WTC11 (cell line): ENCODE measurements at regions of chr3 and their contacts with region 1.

Region 1: DNA sequence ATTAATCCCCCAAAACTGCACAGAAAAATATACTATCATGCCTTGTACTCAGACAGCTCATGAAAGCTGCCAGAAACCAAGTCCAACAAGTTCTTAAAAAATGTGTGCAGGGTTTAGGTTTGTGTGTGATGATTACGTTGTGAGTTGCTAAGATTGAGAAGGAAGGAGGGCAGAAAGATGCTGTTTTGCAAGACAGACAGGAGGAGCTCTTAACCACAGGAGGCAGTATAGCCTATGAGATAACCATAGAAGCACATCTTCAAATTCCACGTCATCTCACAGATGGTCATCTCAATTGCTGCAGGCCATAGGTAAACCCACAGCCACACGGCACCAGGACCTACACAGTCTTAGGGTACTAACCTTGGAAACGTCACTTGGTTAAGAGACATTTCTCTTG is 191.9 kb downstream of the STT3B start:
- DNase-seq: no peak
- ATAC-seq: peak; percentile 55
- H3K4me3 Mint-ChIP-seq: peak overlapping the region; percentile 32
- H3K27ac Mint-ChIP-seq: peak overlapping the region; percentile 86
- H3K4me1 Mint-ChIP-seq: peaks cover 30% of the 10 kb centered on the region
- H3K27me3 Mint-ChIP-seq: no peaks in the 10 kb centered on the region
- CTCF ChIP-seq: no peak

Region 2: DNA sequence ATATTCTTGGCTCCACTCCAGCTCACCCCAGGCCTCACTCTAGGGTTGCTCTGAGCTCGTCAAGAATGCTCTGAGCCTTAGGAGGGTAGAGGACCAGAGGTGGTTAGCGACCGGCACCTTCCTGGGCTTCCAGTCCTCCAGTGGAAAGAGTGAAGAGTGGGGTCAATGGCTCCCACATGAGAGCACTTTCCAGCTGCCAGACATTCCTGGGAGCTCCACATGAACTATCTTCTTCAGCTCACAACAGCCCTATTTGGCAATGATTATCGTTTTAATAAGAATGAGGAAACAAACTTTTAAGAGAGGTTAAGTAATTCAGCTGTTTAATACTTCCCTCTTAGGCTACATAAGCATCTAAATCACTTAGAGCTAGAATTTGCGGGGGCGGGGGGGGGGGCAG is 52.7 kb before region 1 on chr3:
- CTCF ChIA-PET with region 1: no interaction called
- POLR2A ChIA-PET with region 1: no interaction called
- DNase-seq: no peak
- ATAC-seq: no peak
- H3K4me3 Mint-ChIP-seq: no peak overlapping the region
- H3K27ac Mint-ChIP-seq: no peak overlapping the region
- H3K4me1 Mint-ChIP-seq: peaks cover 16% of the 10 kb centered on the region; the same call in 1 of the 2 replicates
- H3K27me3 Mint-ChIP-seq: no peaks in the 10 kb centered on the region
- CTCF ChIP-seq: no peak

Region 3: GRCh38 chr3:31735667-31736066 is 11.0 kb after region 1 on chr3:
- CTCF ChIA-PET with region 1: interaction called, 10 read pairs
- POLR2A ChIA-PET with region 1: no interaction called
- DNase-seq: no peak
- ATAC-seq: peak; percentile 50
- H3K4me3 Mint-ChIP-seq: no peak overlapping the region
- H3K27ac Mint-ChIP-seq: peak overlapping the region; percentile 46
- H3K4me1 Mint-ChIP-seq: peaks cover 29% of the 10 kb centered on the region
- H3K27me3 Mint-ChIP-seq: no peaks in the 10 kb centered on the region
- CTCF ChIP-seq: no peak

Region 4: DNA sequence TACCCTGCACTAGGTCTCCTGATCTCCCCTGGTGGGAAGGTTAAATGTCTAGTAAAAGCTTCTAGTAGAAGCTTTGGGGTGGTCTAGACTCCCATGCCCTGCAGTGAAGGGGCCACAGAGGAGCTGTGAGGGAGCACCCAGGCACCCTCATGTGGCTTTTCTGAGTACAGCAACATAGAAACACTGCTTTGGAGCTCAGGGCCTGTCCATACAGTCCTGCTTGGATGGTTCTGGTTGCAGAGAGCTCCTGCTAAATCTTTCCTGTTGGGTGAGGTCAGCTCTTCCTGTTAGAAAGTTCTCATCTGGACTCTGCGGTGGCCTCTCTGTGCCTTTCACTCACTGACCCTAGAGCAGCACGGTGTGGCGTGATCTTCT is 429.5 kb after region 1 on chr3:
- CTCF ChIA-PET with region 1: interaction called, 17 read pairs
- POLR2A ChIA-PET with region 1: no interaction called
- DNase-seq: peak; percentile 37
- ATAC-seq: peak; percentile 98
- H3K4me3 Mint-ChIP-seq: no peak overlapping the region
- H3K27ac Mint-ChIP-seq: no peak overlapping the region
- H3K4me1 Mint-ChIP-seq: peaks cover 15% of the 10 kb centered on the region
- H3K27me3 Mint-ChIP-seq: peaks cover 6% of the 10 kb centered on the region
- CTCF ChIP-seq: no peak; the same call in 1 of the 2 replicates